ENCODE measurements at regions of chr4 and their contacts with region 1.

Region 1: DNA sequence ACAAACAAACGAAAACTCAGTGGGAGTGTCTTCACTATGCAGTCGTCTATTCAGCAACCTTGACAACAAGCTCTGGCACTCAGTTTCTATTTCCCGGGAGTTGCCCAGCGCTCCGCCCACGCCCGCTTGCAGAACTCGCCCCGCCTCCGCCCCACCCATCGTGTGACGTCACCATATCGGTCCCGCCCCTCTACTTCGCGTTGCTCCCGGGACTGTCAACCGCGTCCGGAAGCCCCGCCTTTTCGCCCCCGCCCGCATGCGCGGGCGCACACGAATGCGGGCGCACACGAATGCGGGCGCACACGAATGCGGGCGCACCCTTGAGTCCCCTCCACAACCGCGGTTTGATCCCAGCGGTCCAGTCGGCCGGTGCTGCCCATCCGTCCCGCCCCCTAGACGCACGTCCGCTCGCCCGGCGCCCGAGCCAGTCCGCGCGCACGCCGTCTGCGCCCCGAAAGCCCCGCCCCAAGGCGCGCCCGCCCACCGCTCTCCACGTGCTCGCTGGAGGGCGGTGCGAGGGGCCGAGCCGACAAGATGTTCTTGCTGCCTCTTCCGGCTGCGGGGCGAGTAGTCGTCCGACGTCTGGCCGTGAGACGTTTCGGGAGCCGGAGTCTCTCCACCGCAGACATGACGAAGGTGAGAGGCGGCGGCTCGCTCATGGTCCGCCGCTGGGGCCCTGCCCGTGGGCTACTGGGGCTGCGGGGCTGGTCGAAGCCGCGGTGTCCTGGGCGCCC is at the start of gene LAP3:
- DNase-seq: peak; percentile 99
- ATAC-seq: peak; percentile 90
- H3K4me3 Mint-ChIP-seq: peak within 1 kb of the TSS; percentile 89
- H3K27ac Mint-ChIP-seq: peak within 1 kb of the TSS; percentile 92
- H3K4me1 Mint-ChIP-seq: peaks cover 32% of the 10 kb centered on the region
- H3K27me3 Mint-ChIP-seq: no peaks in the 10 kb centered on the region
- CTCF ChIP-seq: no peak
- total RNA-seq, gene LAP3: 45.1 and 50.5 TPM in 2 replicates

Region 2: GRCh38 chr4:17511950-17512795 is 64.9 kb before region 1 on chr4 and contains the start of gene QDPR:
- CTCF ChIA-PET with region 1: no interaction called
- POLR2A ChIA-PET with region 1: no interaction called
- intact Hi-C with region 1: loop called (anchors 2 kb)
- DNase-seq: peak; percentile 60
- ATAC-seq: peak; percentile 90
- H3K4me3 Mint-ChIP-seq: peak within 1 kb of the TSS; percentile 95
- H3K27ac Mint-ChIP-seq: peak within 1 kb of the TSS; percentile 62
- H3K4me1 Mint-ChIP-seq: peaks cover 19% of the 10 kb centered on the region
- H3K27me3 Mint-ChIP-seq: peaks cover 9% of the 10 kb centered on the region
- CTCF ChIP-seq: no peak
- total RNA-seq, gene QDPR: 7.2 and 8.9 TPM in 2 replicates

Region 3: DNA sequence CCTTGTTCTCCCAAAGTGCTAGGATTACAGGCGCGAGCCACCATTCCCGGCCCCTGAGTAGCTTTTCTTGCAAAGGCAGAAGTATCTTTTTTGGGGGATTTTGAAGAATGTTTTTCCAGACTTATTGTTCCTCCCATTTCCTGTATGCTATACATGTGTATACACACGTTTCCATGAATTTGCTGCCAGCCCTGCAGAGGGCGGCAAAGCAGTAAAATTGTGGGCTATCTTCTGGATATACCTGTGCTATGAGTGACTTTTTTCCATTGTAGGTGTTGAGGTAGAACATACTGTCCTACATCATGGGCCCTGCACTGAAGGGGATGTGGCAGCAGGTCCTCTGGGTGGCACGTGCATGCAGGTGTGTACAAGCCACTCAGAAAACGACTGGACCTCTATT is 20.4 kb after region 1 on chr4:
- CTCF ChIA-PET with region 1: no interaction called
- POLR2A ChIA-PET with region 1: interaction called, 25 read pairs
- intact Hi-C with region 1: loop called (anchors 1 kb)
- DNase-seq: no peak
- ATAC-seq: no peak
- H3K4me3 Mint-ChIP-seq: no peak overlapping the region
- H3K27ac Mint-ChIP-seq: no peak overlapping the region
- H3K4me1 Mint-ChIP-seq: peaks cover 32% of the 10 kb centered on the region
- H3K27me3 Mint-ChIP-seq: no peaks in the 10 kb centered on the region
- CTCF ChIP-seq: no peak

Region 4: GRCh38 chr4:17614416-17615299 is 37.6 kb after region 1 on chr4 and contains the start of gene MED28:
- CTCF ChIA-PET with region 1: interaction called, 3 read pairs
- POLR2A ChIA-PET with region 1: interaction called, 75 read pairs
- intact Hi-C with region 1: loop called (anchors 1 kb)
- DNase-seq: peak; percentile 89
- ATAC-seq: peak; percentile 86
- H3K4me3 Mint-ChIP-seq: peak within 1 kb of the TSS; percentile 97
- H3K27ac Mint-ChIP-seq: peak within 1 kb of the TSS; percentile 95
- H3K4me1 Mint-ChIP-seq: peaks cover 45% of the 10 kb centered on the region
- H3K27me3 Mint-ChIP-seq: no peaks in the 10 kb centered on the region
- CTCF ChIP-seq: no peak
- total RNA-seq, gene MED28: 71.9 and 74.6 TPM in 2 replicates

Region 5: GRCh38 chr4:17664755-17665154 is 87.7 kb after region 1 on chr4:
- CTCF ChIA-PET with region 1: no interaction called
- POLR2A ChIA-PET with region 1: no interaction called
- intact Hi-C with region 1: loop called (anchors 1 kb)
- DNase-seq: no peak
- ATAC-seq: peak; percentile 89
- H3K4me3 Mint-ChIP-seq: peak overlapping the region; percentile 25
- H3K27ac Mint-ChIP-seq: peak overlapping the region; percentile 12
- H3K4me1 Mint-ChIP-seq: peaks cover 40% of the 10 kb centered on the region
- H3K27me3 Mint-ChIP-seq: peaks cover 4% of the 10 kb centered on the region
- CTCF ChIP-seq: no peak

Region 6: GRCh38 chr4:18021722-18022571 is 444.8 kb after region 1 on chr4 and contains the start of gene LCORL:
- CTCF ChIA-PET with region 1: no interaction called
- POLR2A ChIA-PET with region 1: interaction called, 3 read pairs
- intact Hi-C with region 1: loop called (anchors 1 kb)
- DNase-seq: peak; percentile 91
- ATAC-seq: peak; percentile 81
- H3K4me3 Mint-ChIP-seq: peak within 1 kb of the TSS; percentile 97
- H3K27ac Mint-ChIP-seq: peak within 1 kb of the TSS; percentile 92
- H3K4me1 Mint-ChIP-seq: peaks cover 19% of the 10 kb centered on the region
- H3K27me3 Mint-ChIP-seq: no peaks in the 10 kb centered on the region
- CTCF ChIP-seq: no peak
- total RNA-seq, gene LCORL: 11.9 and 12.6 TPM in 2 replicates